ENCODE measurements at regions of chr13 and their contacts with region 1.

Region 1: DNA sequence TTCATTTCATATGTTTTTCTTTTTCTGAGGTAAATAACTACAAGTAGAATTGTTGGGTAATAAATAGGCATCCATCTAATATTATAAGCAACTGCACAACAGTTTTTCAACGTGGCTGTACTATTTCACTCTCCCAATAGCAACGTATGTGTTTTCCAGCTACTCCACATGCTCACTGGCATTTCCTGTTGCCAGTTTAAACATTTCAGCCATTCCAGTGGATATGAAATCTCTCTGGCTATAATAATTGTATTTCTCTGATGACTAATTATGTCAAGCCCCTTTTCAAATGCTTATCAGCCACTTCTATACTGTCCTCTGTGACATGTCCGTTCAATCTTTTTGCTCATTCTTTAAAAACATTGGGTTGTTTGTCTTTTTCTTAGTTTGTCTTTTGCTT is 26.8 kb upstream of the ALOX5AP start:
- DNase-seq: no peak
- CTCF ChIP-seq: no peak

Region 2: GRCh38 chr13:30567072-30567471 is 141.5 kb before region 1 on chr13:
- CTCF ChIA-PET with region 1: no interaction called
- POLR2A ChIA-PET with region 1: no interaction called
- DNase-seq: no peak
- CTCF ChIP-seq: no peak

Region 3: DNA sequence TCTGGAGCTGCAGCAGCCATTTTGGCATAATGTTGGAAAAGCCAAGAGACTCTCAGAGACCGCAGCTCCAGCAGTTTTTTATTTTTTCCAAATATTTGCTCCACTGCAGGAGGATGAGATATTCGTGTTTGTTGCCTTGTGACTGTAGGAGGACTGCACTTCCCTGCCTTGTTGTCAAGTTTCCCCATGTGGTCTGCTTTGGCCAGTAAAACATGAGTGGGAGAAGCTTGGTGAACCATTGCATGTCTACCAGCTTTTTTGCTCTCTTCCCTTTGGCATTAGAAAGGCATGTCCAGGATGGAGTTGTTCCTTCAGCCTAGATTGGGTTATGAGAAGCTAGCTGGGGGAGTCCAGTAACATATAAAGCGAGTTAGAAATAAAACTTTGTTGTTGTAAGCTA is 20.9 kb before region 1 on chr13:
- CTCF ChIA-PET with region 1: no interaction called
- POLR2A ChIA-PET with region 1: interaction called, 10 read pairs
- DNase-seq: no peak
- CTCF ChIP-seq: no peak

Region 4: DNA sequence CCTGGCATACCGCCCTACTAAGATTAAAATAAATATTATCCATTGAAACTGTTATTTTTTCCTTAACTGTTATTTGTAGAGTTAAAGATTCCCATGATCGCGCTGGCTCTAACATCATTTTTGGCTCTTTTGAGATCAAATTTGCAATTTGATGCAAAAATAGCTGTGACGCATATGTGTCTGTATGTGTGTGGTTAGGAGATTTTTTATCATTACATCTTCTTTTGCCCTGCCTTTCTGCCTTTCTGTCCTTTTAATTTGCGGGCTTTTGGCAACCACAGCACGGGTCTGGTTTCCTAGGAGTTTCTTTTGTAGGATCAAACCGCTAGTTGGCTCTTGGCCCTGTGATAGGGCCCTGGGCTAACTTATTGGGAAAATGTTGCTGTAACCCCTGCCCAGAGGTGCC is 10.5 kb before region 1 on chr13:
- CTCF ChIA-PET with region 1: no interaction called
- POLR2A ChIA-PET with region 1: no interaction called
- DNase-seq: no peak
- CTCF ChIP-seq: no peak

Measured in GM10248 (cell line).